Dorsolateral prefrontal cortex (tissue), 120 donors: ENCODE measurements at regions of chr17 and their contacts with region 1.

Region 1: DNA sequence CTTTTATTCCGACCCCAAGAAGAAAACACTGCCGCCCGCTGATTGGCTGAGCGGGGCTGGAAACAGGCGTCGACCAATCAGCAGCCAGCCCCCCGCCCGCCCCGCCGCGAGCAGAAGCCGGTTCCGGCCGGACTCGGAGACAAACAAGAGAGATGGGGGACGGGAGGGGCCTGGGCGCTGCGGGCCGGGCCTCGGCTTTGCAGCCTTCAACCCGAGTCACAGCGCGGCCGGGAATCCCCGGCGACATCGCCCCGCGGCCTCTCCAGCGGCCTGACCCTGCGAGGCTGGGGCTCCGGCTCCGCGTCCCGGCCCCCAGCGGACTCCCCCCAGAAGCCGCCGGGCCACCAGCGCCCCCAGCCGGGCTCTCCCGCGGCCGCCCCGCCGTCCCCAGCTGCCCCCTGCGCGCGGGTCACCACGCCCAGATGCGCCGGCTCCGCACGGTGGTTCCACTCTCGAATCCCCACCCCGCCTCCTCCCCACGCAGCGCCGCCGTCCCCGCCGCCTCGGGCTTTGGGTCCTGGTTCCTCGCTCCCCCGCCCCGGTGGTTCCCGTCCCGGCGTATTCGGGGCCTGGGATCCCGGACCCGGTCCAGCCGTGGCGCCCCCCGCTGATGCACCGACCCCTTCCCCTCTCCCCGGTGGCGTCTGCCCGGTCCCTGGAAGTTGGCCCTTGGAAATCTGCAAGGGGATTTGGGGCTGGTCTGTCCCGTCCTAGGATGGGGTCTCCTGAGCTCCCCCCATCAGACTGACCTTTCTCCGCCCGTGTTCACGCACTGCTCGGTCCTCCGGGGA is 417 bp upstream of the SLC43A2 start:
- DNase-seq: peak; percentile 96 to 98 (median 97)
- H3K4me3 ChIP-seq: peak overlapping the region; percentile 63 to 97 (median 88)
- H3K27ac ChIP-seq: peak overlapping the region; percentile 84 to 99 (median 98)
- H3K27me3 ChIP-seq: no peaks in the 10 kb centered on the region
- CTCF ChIP-seq: peak in 50 of 56 donors; percentile 6 to 74 (median 51)

Region 2: DNA sequence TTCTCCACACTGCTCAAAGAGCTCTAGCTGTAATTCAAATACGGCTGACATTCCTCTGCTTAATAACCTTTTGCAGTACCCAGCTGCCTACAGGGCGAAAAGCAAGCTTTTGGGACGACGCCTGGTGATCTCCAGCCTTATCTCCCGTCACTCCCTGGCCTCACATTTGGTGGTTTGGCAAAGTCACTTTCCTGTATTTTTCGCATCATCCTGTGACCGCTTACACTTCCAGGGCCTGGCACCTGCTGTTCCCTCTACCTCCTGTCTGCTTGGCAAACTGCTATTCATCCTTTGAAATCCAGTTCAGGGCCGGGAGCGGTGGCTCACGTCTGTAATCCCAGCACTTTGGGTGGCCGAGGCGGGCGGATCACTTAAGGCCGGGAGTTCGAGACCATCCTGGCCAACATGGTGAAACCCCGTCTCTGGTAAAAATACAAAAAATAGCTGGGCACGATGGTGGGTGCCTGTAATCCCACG is 361.5 kb before region 1 on chr17:
- intact Hi-C with region 1: loop called in 1 of 2 experiments (anchors 10 kb)
- DNase-seq: peak in 1 of 10 donors; percentile 76
- H3K4me3 ChIP-seq: peak overlapping the region; percentile 55 to 83 (median 71)
- H3K27ac ChIP-seq: peak overlapping the region in 54 of 59 donors; percentile 1 to 89 (median 76)
- H3K27me3 ChIP-seq: peaks cover 0 to 33% (median 14%) of the 10 kb centered on the region in 45 donors
- CTCF ChIP-seq: no peak

Region 3: DNA sequence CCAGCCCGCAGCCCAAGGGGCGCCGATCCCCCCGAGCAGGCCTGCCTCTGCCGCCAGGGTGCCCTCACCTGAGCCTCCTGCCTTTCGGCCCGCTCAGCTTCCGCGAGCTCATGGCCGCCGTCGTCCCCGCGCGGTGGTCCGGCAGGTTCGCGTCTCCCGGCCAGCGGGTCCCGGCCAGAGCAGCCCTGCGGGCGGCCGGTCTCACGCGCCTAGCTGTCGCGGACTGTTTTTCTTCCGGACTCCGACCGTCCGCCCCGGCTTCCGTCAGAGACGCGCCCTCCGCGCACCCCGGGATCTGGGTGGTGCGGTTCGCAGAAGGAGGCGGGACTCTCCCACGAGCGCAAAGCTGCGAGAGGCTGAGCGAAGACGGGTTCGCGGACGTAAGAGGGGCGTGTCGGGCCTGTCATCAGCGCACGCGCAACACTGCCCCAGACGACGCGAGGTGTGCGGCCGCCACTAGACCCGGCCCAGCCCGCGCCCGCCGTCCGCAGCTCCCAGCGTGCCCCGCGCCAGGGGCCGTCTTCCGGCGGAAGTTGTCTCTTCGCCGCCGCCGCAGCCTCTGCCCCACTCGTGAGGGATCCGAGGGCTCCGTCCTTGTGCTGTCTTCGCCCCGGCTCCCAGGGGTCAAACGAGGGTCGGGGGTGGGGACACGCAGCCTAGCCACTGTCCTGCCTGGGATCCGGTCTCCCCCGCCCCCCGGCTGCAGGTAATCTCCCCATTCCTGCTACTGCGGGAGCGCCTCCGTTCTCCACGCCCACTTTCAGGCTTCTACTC is 112.5 kb before region 1 on chr17 and contains the start of gene INPP5K:
- intact Hi-C with region 1: loop called in 1 of 2 experiments (anchors 5 kb)
- DNase-seq: peak; percentile 96 to 99 (median 98)
- H3K4me3 ChIP-seq: peak within 1 kb of the TSS; percentile 67 to 100 (median 96)
- H3K27ac ChIP-seq: peak within 1 kb of the TSS in 58 of 59 donors; percentile 51 to 98 (median 90)
- H3K27me3 ChIP-seq: no peaks in the 10 kb centered on the region
- CTCF ChIP-seq: peak in 40 of 56 donors; percentile 4 to 64 (median 29)
- total RNA-seq, gene INPP5K: 28.5 to 70.6 (median 43.8) TPM

Region 4: GRCh38 chr17:1561400-1562175 is 67.5 kb before region 1 on chr17:
- intact Hi-C with region 1: loop called in 1 of 2 experiments (anchors 5 kb)
- DNase-seq: no peak
- H3K4me3 ChIP-seq: peak overlapping the region; percentile 49 to 94 (median 75)
- H3K27ac ChIP-seq: peak overlapping the region in 51 of 59 donors; percentile 9 to 91 (median 69)
- H3K27me3 ChIP-seq: no peaks in the 10 kb centered on the region
- CTCF ChIP-seq: peak in 9 of 56 donors; percentile 6 to 27 (median 12)

Region 5: GRCh38 chr17:1573916-1574696 is 54.9 kb before region 1 on chr17:
- intact Hi-C with region 1: loop called (anchors 1 to 2 kb)
- DNase-seq: peak in 9 of 10 donors; percentile 71 to 87 (median 80)
- H3K4me3 ChIP-seq: peak overlapping the region in 3 of 59 donors; percentile 7 to 21 (median 14)
- H3K27ac ChIP-seq: peak overlapping the region in 55 of 59 donors; percentile 3 to 93 (median 73)
- H3K27me3 ChIP-seq: no peaks in the 10 kb centered on the region
- CTCF ChIP-seq: peak; percentile 58 to 97 (median 93)

Region 6: GRCh38 chr17:1639549-1640343 is 10.7 kb after region 1 on chr17:
- intact Hi-C with region 1: loop called in 1 of 2 experiments (anchors 1 kb)
- DNase-seq: peak in 4 of 10 donors; percentile 45 to 64 (median 52)
- H3K4me3 ChIP-seq: peak overlapping the region in 3 of 59 donors; percentile 22 to 47 (median 29)
- H3K27ac ChIP-seq: peak overlapping the region in 49 of 59 donors; percentile 9 to 85 (median 67)
- H3K27me3 ChIP-seq: no peaks in the 10 kb centered on the region
- CTCF ChIP-seq: no peak

Region 7: DNA sequence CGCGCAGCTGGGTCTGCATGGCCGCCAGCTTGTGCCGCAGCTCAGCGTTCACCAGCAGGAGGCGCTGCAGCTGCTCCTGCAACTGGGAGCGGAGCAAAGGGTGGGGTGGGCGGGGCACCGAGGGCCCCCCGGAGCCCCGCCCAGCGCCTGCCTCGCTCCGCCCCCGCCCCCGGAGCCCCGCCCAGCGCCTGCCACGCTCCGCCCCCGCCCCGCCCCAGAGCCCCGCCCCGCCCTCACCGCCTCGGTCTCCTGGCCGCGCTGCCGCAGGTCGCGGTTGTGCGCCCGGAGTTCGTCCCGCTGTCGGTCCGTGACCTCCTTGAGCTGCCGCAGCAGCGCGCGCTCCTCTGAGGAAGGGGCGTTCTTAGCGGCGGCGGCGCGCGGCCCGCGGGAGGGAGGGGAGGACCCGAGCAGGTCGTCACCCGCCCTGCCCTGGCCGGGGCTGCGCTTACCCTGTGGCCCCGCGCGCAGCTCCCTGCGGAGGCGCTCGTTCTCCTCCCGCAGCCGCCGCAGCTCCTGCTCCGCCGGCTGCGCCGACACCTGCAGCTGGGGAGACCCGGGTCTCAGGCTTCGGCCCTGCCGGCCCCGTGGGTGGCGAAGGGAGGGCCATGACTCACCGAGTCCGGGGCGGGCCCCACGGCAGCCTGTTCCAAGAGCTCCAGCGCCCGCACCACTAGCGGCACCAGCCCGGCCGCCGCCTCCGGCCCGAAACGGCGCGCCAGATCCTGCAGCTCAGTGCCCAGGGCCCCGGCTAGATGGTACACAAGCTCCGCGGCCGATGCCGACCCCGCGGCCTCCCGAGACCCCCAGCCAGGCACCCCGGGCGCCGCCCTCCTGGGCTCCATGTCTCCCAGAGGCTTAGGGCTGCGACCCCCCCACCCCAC is 20.2 kb after region 1 on chr17:
- intact Hi-C with region 1: loop called (anchors 2 kb)
- DNase-seq: peak; percentile 90 to 95 (median 92)
- H3K4me3 ChIP-seq: peak overlapping the region; percentile 58 to 92 (median 75)
- H3K27ac ChIP-seq: peak overlapping the region; percentile 59 to 99 (median 94)
- H3K27me3 ChIP-seq: no peaks in the 10 kb centered on the region
- CTCF ChIP-seq: peak in 52 of 56 donors; percentile 63 to 97 (median 81)

Region 8: GRCh38 chr17:1684378-1685189 is 55.5 kb after region 1 on chr17 and contains the start of gene PRPF8:
- intact Hi-C with region 1: no loop called
- DNase-seq: peak; percentile 94 to 99 (median 98)
- H3K4me3 ChIP-seq: peak within 1 kb of the TSS; percentile 66 to 99 (median 92)
- H3K27ac ChIP-seq: peak within 1 kb of the TSS; percentile 3 to 98 (median 90)
- H3K27me3 ChIP-seq: no peaks in the 10 kb centered on the region
- CTCF ChIP-seq: peak in 33 of 56 donors; percentile 5 to 56 (median 31)
- total RNA-seq, gene PRPF8: 220 to 305 (median 265) TPM